HEK293 (cell line): ENCODE measurements at regions of chr5 and their contacts with region 1.

Region 1: GRCh38 chr5:177403792-177404640 is 3.6 kb upstream of the PFN3 start:
- H3K4me3 ChIP-seq: peak overlapping the region; percentile 50
- H3K27ac ChIP-seq: peak overlapping the region; percentile 56; the same call in 1 of the 2 replicates
- H3K4me1 ChIP-seq: no peaks in the 10 kb centered on the region
- CTCF ChIP-seq: peak; percentile 97

Region 2: GRCh38 chr5:177162379-177162778 is 241.6 kb before region 1 on chr5:
- CTCF ChIA-PET with region 1: no interaction called
- POLR2A ChIA-PET with region 1: no interaction called
- H3K4me3 ChIP-seq: no peak overlapping the region
- H3K27ac ChIP-seq: no peak overlapping the region
- H3K4me1 ChIP-seq: no peaks in the 10 kb centered on the region
- CTCF ChIP-seq: no peak

Region 3: DNA sequence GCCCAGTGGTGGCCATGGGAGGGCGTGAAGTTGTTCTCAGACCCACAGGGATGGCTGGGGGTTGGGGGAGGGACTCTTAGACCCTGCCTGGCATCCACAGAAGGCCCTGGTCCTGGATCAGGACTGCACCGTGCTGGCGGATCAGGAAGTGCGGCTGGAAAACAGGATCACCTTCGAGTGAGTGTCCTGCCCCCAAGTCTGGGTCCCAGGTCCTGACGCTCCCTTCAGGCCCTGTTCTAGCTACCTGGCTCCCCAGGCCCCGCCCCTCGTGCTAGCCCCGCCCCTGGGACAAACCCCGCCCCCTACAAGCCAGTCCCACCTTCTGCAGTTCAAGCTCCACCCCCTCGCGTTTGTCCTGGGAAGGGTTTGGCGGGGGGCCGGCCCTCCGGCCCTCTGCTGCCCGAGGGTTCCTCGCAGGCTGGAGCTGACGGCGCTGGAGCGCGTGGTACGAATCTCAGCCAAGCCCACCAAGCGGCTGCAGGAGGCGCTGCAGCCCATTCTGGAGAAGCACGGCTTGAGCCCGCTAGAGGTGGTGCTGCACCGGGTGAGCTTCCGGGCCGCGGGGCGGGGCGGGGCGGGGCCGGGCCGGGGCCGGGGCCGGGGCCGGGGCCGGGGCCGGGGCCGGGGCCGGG is 33.4 kb before region 1 on chr5:
- CTCF ChIA-PET with region 1: interaction called, 63 read pairs
- POLR2A ChIA-PET with region 1: interaction called, 20 read pairs
- H3K4me3 ChIP-seq: peak overlapping the region; percentile 63
- H3K27ac ChIP-seq: peak overlapping the region; percentile 88; the same call in 1 of the 2 replicates
- H3K4me1 ChIP-seq: peaks cover 6% of the 10 kb centered on the region; the same call in 1 of the 2 replicates
- CTCF ChIP-seq: peak; percentile 63

Region 4: GRCh38 chr5:177378884-177379883 is 24.8 kb before region 1 on chr5:
- CTCF ChIA-PET with region 1: interaction called, 63 read pairs
- POLR2A ChIA-PET with region 1: no interaction called
- H3K4me3 ChIP-seq: no peak overlapping the region
- H3K27ac ChIP-seq: no peak overlapping the region
- H3K4me1 ChIP-seq: peaks cover 6% of the 10 kb centered on the region; the same call in 1 of the 2 replicates
- CTCF ChIP-seq: no peak

Region 5: DNA sequence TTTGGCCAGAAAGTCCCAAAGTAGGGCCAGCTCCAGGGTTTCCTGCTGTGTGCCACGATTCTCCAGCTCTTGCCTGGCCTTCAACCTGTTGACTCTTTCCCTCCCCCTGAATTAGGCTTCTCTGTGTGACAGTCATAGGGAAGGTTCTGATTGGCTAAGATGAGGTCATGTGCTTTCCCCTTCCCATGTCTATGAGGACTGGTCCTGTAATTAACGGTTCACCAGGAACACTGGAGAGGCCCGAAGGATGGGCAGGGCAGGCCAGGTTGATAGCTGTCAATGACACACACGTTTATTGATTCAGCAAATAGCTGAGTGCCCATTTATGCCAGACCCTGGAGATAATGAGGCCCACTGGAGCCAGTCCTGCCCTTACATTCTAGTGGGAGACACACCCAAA is 33.6 kb after region 1 on chr5:
- CTCF ChIA-PET with region 1: interaction called, 15 read pairs
- POLR2A ChIA-PET with region 1: interaction called, 5 read pairs
- H3K4me3 ChIP-seq: no peak overlapping the region
- H3K27ac ChIP-seq: no peak overlapping the region
- H3K4me1 ChIP-seq: no peaks in the 10 kb centered on the region
- CTCF ChIP-seq: no peak

Region 6: GRCh38 chr5:177446200-177447065 is 42.4 kb after region 1 on chr5 and contains the start of gene PRR7:
- CTCF ChIA-PET with region 1: interaction called, 76 read pairs
- POLR2A ChIA-PET with region 1: interaction called, 12 read pairs
- H3K4me3 ChIP-seq: peak within 1 kb of the TSS; percentile 54
- H3K27ac ChIP-seq: peak within 1 kb of the TSS; percentile 60; the same call in 1 of the 2 replicates
- H3K4me1 ChIP-seq: no peaks in the 10 kb centered on the region
- CTCF ChIP-seq: peak; percentile 72